H1 (cell line): ENCODE measurements at regions of chr1 and their contacts with region 1.

Region 1: DNA sequence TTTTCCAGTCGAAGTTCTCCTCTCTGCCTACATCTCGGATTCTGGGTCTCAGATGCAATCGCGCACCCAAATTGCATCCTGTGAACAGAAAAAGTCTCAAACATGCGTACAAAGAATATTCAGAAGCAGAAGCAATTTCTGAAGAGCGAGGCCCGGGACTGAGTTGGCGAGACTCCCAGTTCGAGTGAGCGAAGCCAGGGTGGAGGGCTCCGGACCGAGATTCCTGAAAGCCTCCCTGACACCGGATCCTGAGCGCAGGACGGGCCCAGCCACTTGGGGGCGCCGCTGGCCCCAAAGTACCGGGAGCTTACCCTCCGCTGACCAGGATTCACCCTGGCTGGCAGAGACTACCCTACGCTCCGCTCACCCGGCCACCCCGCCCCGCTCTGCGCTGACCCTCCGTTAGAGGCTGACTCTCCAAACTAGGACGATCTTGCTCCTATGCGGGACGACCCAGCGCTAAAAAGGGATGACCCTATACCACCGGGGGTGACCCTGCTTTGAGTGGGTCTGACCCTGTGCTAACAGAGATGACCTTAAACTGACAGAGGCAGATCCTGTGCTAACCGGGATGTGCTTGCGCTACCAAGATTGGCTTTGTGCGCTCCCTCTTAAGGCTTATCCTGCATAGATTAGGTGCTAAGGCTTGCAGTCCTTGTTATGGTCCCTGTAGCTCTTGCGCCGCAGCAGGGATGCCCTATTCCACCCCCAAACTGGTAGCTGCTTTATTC is 12.1 kb downstream of the FOXD2 start:
- DNase-seq: peak in 1 of 2 experiments; percentile 94
- H3K4me3 ChIP-seq: peak overlapping the region in 1 of 4 experiments; percentile 46; a peak in 4 of 8 replicates
- H3K27ac ChIP-seq: no peak overlapping the region
- H3K4me1 ChIP-seq: peaks cover 4 to 24% (median 16%) of the 10 kb centered on the region in 4 experiments
- H3K27me3 ChIP-seq: peaks cover 67 to 74% (median 72%) of the 10 kb centered on the region in 4 experiments
- CTCF ChIP-seq: peak; percentile 87 to 93 (median 93)
- EP300 ChIP-seq: no peak
- POLR2A ChIP-seq: no peak
- RAD21 ChIP-seq: peak; percentile 80 to 87

Region 2: DNA sequence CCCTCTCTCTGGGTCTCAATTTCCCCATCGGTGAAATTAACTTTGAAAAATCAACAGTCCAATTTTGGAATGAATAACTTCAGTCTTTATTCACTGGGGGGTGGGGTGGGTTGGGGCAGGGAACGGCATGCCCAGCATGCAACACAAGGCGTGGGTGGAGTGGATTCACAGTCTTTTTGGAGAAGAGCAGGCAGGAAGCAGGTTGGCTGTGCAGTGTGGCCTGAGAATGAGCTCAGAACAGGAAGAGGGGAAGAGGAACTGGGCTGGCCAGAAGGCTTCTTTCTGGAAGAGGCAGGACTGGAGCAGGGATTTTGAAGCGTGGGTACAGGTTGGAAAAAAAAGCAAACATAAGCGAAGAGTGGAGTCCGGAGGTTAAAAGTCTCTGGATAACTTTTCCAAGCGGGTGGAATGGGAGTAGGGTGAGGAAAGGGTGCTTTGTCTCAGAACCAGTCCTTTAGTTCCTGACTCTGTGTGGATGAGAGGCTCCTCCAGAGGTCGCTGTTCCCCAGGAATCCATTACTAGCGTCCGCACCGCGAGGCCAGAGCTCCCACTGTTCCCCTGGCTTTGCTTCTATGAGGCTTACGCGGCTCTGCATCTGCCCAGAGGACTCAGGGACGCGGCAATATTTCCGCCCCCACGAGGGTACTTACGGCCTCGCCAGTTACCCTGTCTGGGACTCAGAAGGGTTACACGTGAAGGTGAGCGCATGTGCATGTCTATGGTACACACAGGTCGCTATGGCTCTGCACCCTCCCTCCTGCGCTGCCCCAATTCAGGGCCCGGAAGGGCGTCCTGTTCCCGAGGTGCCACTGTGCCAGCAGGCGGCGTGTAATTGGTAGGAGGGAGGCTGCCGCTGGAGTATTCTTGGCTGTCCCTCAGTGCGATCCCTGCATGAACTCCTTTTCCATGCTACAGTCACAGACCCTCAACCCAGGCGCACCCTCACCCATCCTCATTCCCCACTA is 17.6 kb before region 1 on chr1:
- CTCF ChIA-PET with region 1: interaction called, 46 read pairs
- POLR2A ChIA-PET with region 1: interaction called, 4 read pairs
- DNase-seq: peak; percentile 58 to 94
- H3K4me3 ChIP-seq: peak overlapping the region; percentile 28 to 54 (median 42); a peak in 7 of 8 replicates
- H3K27ac ChIP-seq: no peak overlapping the region
- H3K4me1 ChIP-seq: peaks cover 3 to 36% (median 15%) of the 10 kb centered on the region in 4 experiments; a peak in 6 of 7 replicates
- H3K27me3 ChIP-seq: peaks cover 65 to 99% (median 90%) of the 10 kb centered on the region in 4 experiments
- CTCF ChIP-seq: peak in 2 of 3 experiments; percentile 83 to 87; a peak in 3 of 4 replicates
- EP300 ChIP-seq: no peak
- POLR2A ChIP-seq: no peak
- RAD21 ChIP-seq: peak; percentile 79 to 83

Region 3: DNA sequence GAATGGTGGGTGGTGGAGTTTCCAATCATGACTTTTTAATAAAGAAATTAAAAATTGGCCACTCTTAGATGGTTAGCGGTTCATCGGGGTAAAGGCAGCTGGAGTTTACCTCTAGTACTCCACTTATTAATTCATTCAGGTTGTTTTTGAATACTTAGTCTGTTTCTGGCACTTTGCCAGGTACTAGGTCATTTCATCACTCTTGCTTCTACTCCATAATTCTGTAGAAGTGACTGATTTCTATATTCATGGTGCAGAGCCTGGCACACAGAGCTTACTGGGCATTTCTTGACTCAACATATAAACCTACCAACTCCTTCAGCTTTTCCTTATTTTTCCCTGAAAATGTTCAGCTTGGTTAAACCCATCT is 19.4 kb after region 1 on chr1:
- CTCF ChIA-PET with region 1: interaction called, 14 read pairs
- POLR2A ChIA-PET with region 1: interaction called, 3 read pairs
- DNase-seq: no peak
- H3K4me3 ChIP-seq: no peak overlapping the region
- H3K27ac ChIP-seq: no peak overlapping the region
- H3K4me1 ChIP-seq: peaks cover 0 to 7% (median 3%) of the 10 kb centered on the region in 4 experiments; a peak in 3 of 7 replicates
- H3K27me3 ChIP-seq: no peaks in the 10 kb centered on the region
- CTCF ChIP-seq: no peak
- EP300 ChIP-seq: no peak
- POLR2A ChIP-seq: no peak
- RAD21 ChIP-seq: no peak

Region 4: DNA sequence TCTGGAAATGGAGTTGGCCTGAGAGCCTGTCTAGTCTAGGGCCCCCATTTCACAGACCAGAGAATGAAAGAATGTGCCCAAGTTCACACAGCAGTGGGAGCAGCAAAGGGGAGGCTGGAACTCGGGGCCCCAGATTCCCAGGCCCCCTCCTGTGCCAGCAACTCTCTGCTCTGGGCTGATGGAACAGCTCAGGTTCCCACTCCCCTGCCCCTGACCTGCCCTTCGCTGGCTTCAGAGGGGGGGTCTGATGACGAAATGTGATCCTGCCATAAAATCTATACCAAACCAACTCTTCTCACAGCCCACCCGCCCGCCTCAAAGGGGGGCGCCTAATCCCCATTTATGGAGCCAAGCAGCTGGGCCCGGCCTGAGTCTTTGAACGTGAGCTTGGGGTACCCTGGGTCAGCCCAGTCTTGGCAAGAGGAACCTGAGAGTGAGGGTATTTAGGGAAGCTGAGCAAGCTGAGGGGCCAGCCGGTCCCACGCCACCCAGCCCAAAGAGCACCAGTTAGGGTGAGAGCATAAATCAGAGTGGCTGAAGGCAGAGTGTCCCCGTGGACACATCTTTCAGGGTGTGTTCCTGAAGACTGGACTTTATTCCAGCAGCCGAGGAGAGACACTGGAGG is 52.9 kb after region 1 on chr1:
- CTCF ChIA-PET with region 1: interaction called, 29 read pairs
- POLR2A ChIA-PET with region 1: no interaction called
- DNase-seq: no peak
- H3K4me3 ChIP-seq: no peak overlapping the region
- H3K27ac ChIP-seq: no peak overlapping the region
- H3K4me1 ChIP-seq: peaks cover 0 to 4% (median 0%) of the 10 kb centered on the region in 4 experiments; a peak in 1 of 7 replicates
- H3K27me3 ChIP-seq: peaks cover 15 to 30% (median 25%) of the 10 kb centered on the region in 4 experiments
- CTCF ChIP-seq: no peak
- EP300 ChIP-seq: no peak
- POLR2A ChIP-seq: no peak
- RAD21 ChIP-seq: no peak

Region 5: GRCh38 chr1:47515164-47515789 is 65.3 kb after region 1 on chr1:
- CTCF ChIA-PET with region 1: interaction called, 29 read pairs
- POLR2A ChIA-PET with region 1: no interaction called
- DNase-seq: no peak
- H3K4me3 ChIP-seq: no peak overlapping the region
- H3K27ac ChIP-seq: no peak overlapping the region
- H3K4me1 ChIP-seq: no peaks in the 10 kb centered on the region
- H3K27me3 ChIP-seq: peaks cover 0 to 4% (median 1%) of the 10 kb centered on the region in 4 experiments; a peak in 3 of 7 replicates
- CTCF ChIP-seq: peak; percentile 15 to 19 (median 18); a peak in 3 of 4 replicates
- EP300 ChIP-seq: no peak
- POLR2A ChIP-seq: no peak
- RAD21 ChIP-seq: peak; percentile 28 to 40; a peak in 2 of 4 replicates

Region 6: GRCh38 chr1:47624531-47624930 is 174.5 kb after region 1 on chr1:
- CTCF ChIA-PET with region 1: interaction called, 14 read pairs
- POLR2A ChIA-PET with region 1: no interaction called
- DNase-seq: peak; percentile 29 to 55
- H3K4me3 ChIP-seq: no peak overlapping the region
- H3K27ac ChIP-seq: no peak overlapping the region
- H3K4me1 ChIP-seq: no peaks in the 10 kb centered on the region; a peak in 1 of 7 replicates
- H3K27me3 ChIP-seq: peaks cover 0 to 2% (median 0%) of the 10 kb centered on the region in 4 experiments; a peak in 2 of 7 replicates
- CTCF ChIP-seq: peak; percentile 83 to 99 (median 91)
- EP300 ChIP-seq: no peak
- POLR2A ChIP-seq: no peak
- RAD21 ChIP-seq: peak; percentile 84 to 86

Region 7: GRCh38 chr1:47710329-47711071 is 260.5 kb after region 1 on chr1:
- CTCF ChIA-PET with region 1: interaction called, 19 read pairs
- POLR2A ChIA-PET with region 1: no interaction called
- DNase-seq: peak in 1 of 2 experiments; percentile 97
- H3K4me3 ChIP-seq: peak overlapping the region; percentile 20 to 63 (median 47); a peak in 4 of 8 replicates
- H3K27ac ChIP-seq: no peak overlapping the region
- H3K4me1 ChIP-seq: peaks cover 0 to 19% (median 5%) of the 10 kb centered on the region in 4 experiments; a peak in 3 of 7 replicates
- H3K27me3 ChIP-seq: peaks cover 44 to 74% (median 71%) of the 10 kb centered on the region in 4 experiments
- CTCF ChIP-seq: peak; percentile 93 to 97 (median 97)
- EP300 ChIP-seq: no peak
- POLR2A ChIP-seq: no peak
- RAD21 ChIP-seq: peak; percentile 93 to 96

Region 8: GRCh38 chr1:47948126-47948525 is 498.1 kb after region 1 on chr1:
- CTCF ChIA-PET with region 1: no interaction called
- POLR2A ChIA-PET with region 1: no interaction called
- DNase-seq: peak in 1 of 2 experiments; percentile 27
- H3K4me3 ChIP-seq: no peak overlapping the region
- H3K27ac ChIP-seq: no peak overlapping the region
- H3K4me1 ChIP-seq: no peaks in the 10 kb centered on the region
- H3K27me3 ChIP-seq: peaks cover 0 to 3% (median 0%) of the 10 kb centered on the region in 4 experiments; a peak in 3 of 7 replicates
- CTCF ChIP-seq: peak; percentile 48 to 82 (median 73)
- EP300 ChIP-seq: peak in 1 of 2 experiments; percentile 26; a peak in 1 of 3 replicates
- POLR2A ChIP-seq: no peak
- RAD21 ChIP-seq: peak; percentile 87 to 90